CD4-positive, alpha-beta memory T cell (primary cell): ENCODE measurements at regions of chr14 and their contacts with region 1.

Region 1: DNA sequence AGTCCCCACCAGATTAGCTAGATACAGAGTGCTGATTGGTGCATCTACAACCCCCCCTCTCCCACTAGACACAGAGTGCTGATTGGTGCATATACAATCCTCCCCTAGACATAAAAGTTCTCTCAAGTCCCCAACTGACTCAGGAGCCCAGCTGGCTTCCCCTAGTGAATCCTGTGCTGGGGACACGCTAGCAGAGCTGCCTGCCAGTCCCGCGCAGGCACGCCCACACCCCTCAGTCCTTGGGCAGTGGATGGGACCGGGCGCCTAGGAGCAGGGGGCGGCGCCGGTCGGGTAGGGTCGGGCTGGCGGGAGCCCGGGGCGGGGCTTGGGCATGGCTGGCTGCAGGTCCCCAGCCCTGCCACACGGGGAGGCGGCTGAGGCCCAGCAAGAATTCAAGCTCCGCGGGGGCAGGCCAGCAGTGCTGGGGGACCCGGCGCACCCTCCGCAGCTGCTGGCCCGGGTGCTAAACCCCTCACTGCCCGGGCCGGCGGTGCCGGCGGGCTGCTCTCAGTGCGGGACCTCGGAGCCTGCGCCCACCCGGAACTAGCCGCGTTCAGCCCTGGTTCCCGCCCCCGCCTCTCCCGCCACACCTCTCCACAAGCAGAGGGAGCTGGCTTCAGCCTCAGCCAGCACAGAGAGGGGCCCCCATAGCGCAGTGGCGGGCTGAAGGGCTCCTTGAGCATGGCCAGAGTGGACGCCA is 64.3 kb upstream of the DDHD1 start:
- DNase-seq: peak; percentile 65 to 77 (median 71)
- H3K4me3 ChIP-seq: peak overlapping the region; percentile 32 to 58
- H3K4me3 Mint-ChIP-seq: peak overlapping the region; percentile 88 to 93 (median 89)
- H3K27ac ChIP-seq: peak overlapping the region; percentile 40
- H3K27ac Mint-ChIP-seq: peak overlapping the region; percentile 14 to 83 (median 56)
- H3K4me1 ChIP-seq: peaks cover 4% of the 10 kb centered on the region
- H3K4me1 Mint-ChIP-seq: peaks cover 5 to 13% (median 9%) of the 10 kb centered on the region in 4 donors
- H3K27me3 ChIP-seq: no peaks in the 10 kb centered on the region
- H3K27me3 Mint-ChIP-seq: no peaks in the 10 kb centered on the region

Region 2: DNA sequence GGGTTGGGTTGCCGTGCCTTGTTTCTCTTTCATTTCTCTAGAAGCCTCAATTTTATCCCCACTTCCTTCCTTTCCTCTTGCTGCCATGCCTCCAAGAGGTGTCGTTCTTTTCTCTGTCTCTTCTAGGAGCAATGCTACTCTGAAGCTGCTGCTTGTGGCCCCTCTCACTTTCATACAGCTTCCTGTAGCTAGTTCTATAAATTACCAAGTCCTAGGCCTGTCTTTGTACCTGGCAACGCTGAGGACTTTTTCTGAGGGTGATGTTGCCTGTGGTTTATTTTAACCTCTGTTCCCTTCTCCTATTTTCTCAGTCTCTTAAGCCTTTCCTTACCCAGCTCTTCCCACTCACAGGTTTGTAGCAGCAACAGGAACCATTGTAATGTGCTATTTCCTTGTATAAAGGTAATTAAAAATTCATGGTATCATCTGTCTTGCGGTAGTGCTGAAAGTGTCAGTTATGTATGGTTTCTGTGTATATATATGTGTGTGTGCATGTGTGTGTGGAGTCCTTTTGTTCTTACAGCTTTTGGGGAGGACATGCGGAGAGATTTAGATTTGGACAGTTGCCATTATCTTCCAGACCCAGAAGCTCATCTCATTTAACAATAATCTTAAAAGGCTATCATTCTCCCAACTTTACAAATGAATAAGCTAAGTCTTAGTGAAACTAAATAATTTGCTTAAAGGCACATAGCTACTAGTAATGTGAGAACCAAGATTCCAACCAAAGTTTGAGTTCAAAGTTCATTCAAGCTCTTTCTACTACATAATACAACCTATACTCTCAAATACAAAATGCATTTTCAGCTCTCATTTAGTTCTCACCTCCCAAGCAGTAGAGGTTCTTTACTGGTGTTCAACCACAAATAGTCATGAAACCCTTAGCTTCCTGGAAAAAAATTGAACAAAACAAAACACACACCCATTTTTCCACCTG is 108.1 kb before region 1 on chr14:
- CTCF ChIA-PET with region 1: interaction called, 6 read pairs
- POLR2A ChIA-PET with region 1: interaction called, 4 read pairs
- intact Hi-C with region 1: loop called (anchors 5 kb)
- DNase-seq: peak; percentile 54 to 67 (median 64)
- H3K4me3 ChIP-seq: peak overlapping the region; percentile 48 to 57
- H3K4me3 Mint-ChIP-seq: no peak overlapping the region
- H3K27ac ChIP-seq: peak overlapping the region; percentile 71
- H3K27ac Mint-ChIP-seq: no peak overlapping the region
- H3K4me1 ChIP-seq: peaks cover 31% of the 10 kb centered on the region
- H3K4me1 Mint-ChIP-seq: peaks cover 2 to 30% (median 17%) of the 10 kb centered on the region in 4 donors
- H3K27me3 ChIP-seq: no peaks in the 10 kb centered on the region
- H3K27me3 Mint-ChIP-seq: no peaks in the 10 kb centered on the region

Region 3: DNA sequence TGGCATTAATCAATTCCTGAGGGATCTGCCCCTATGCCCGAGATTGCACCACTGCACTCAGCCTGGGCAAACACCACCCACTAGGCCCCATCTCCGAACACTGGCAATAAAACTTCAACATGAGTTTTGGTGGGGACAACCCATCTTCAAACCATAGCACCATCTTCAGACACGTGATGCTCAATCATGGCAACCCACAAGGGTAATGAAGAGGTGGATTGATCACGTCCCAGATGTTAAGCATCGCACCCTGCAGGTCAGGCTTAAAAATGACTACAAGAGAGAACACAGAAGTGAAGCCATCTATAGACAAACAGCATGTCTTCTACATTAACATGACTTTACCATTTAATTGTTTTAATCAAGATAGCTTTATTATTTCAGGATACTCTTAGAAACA is 21.5 kb before region 1 on chr14:
- CTCF ChIA-PET with region 1: interaction called, 11 read pairs
- POLR2A ChIA-PET with region 1: no interaction called
- intact Hi-C with region 1: no loop called
- DNase-seq: no peak
- H3K4me3 ChIP-seq: no peak overlapping the region
- H3K4me3 Mint-ChIP-seq: no peak overlapping the region
- H3K27ac ChIP-seq: no peak overlapping the region
- H3K27ac Mint-ChIP-seq: no peak overlapping the region
- H3K4me1 ChIP-seq: no peaks in the 10 kb centered on the region
- H3K4me1 Mint-ChIP-seq: no peaks in the 10 kb centered on the region
- H3K27me3 ChIP-seq: no peaks in the 10 kb centered on the region
- H3K27me3 Mint-ChIP-seq: no peaks in the 10 kb centered on the region

Region 4: DNA sequence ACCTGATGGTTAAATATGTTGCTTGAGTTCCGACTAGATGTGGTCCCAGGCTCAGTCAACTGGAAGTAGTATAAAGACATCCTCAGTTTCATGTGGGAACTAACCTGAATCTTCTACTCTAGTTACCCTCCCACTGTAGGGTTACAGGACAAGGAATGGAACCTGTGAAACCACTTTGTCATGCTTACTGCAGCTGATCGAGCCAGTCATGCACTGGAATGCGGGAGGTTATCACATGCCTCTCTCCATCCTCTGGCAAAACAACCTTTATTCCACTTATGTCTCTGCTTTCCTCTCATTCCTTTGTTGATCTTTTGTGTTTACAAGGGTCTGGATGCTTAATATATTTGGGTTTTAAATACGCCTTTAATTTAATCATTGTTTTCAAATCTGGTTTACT is 47.6 kb after region 1 on chr14:
- CTCF ChIA-PET with region 1: no interaction called
- POLR2A ChIA-PET with region 1: no interaction called
- intact Hi-C with region 1: no loop called
- DNase-seq: no peak
- H3K4me3 ChIP-seq: no peak overlapping the region
- H3K4me3 Mint-ChIP-seq: no peak overlapping the region
- H3K27ac ChIP-seq: no peak overlapping the region
- H3K27ac Mint-ChIP-seq: no peak overlapping the region
- H3K4me1 ChIP-seq: no peaks in the 10 kb centered on the region
- H3K4me1 Mint-ChIP-seq: no peaks in the 10 kb centered on the region
- H3K27me3 ChIP-seq: no peaks in the 10 kb centered on the region
- H3K27me3 Mint-ChIP-seq: no peaks in the 10 kb centered on the region

Region 5: GRCh38 chr14:53501361-53502211 is 284.1 kb after region 1 on chr14:
- CTCF ChIA-PET with region 1: no interaction called
- POLR2A ChIA-PET with region 1: no interaction called
- intact Hi-C with region 1: no loop called
- DNase-seq: no peak
- H3K4me3 ChIP-seq: no peak overlapping the region
- H3K4me3 Mint-ChIP-seq: no peak overlapping the region
- H3K27ac ChIP-seq: no peak overlapping the region
- H3K27ac Mint-ChIP-seq: no peak overlapping the region
- H3K4me1 ChIP-seq: no peaks in the 10 kb centered on the region
- H3K4me1 Mint-ChIP-seq: no peaks in the 10 kb centered on the region
- H3K27me3 ChIP-seq: no peaks in the 10 kb centered on the region
- H3K27me3 Mint-ChIP-seq: peaks cover 0 to 2% of the 10 kb centered on the region in 2 donors

Region 6: GRCh38 chr14:54532111-54533012 is 1314.9 kb after region 1 on chr14:
- CTCF ChIA-PET with region 1: no interaction called
- POLR2A ChIA-PET with region 1: no interaction called
- intact Hi-C with region 1: no loop called
- DNase-seq: no peak
- H3K4me3 ChIP-seq: no peak overlapping the region
- H3K4me3 Mint-ChIP-seq: peak overlapping the region in 1 of 8 donors; percentile 26
- H3K27ac ChIP-seq: no peak overlapping the region
- H3K27ac Mint-ChIP-seq: peak overlapping the region in 4 of 7 donors; percentile 32 to 50 (median 44)
- H3K4me1 ChIP-seq: no peaks in the 10 kb centered on the region
- H3K4me1 Mint-ChIP-seq: peaks cover 0 to 6% (median 3%) of the 10 kb centered on the region in 4 donors
- H3K27me3 ChIP-seq: no peaks in the 10 kb centered on the region
- H3K27me3 Mint-ChIP-seq: no peaks in the 10 kb centered on the region